Transverse colon (tissue), 4 donors: ENCODE measurements at regions of chr4 and their contacts with region 1.

Region 1: GRCh38 chr4:159910721-159911120 is 807.8 kb downstream of the RAPGEF2 start:
- DNase-seq: no peak
- H3K4me3 ChIP-seq: no peak overlapping the region
- H3K27ac ChIP-seq: no peak overlapping the region
- H3K4me1 ChIP-seq: no peaks in the 10 kb centered on the region
- H3K27me3 ChIP-seq: no peaks in the 10 kb centered on the region
- CTCF ChIP-seq: no peak
- EP300 ChIP-seq: no peak
- POLR2A ChIP-seq: no peak

Region 2: DNA sequence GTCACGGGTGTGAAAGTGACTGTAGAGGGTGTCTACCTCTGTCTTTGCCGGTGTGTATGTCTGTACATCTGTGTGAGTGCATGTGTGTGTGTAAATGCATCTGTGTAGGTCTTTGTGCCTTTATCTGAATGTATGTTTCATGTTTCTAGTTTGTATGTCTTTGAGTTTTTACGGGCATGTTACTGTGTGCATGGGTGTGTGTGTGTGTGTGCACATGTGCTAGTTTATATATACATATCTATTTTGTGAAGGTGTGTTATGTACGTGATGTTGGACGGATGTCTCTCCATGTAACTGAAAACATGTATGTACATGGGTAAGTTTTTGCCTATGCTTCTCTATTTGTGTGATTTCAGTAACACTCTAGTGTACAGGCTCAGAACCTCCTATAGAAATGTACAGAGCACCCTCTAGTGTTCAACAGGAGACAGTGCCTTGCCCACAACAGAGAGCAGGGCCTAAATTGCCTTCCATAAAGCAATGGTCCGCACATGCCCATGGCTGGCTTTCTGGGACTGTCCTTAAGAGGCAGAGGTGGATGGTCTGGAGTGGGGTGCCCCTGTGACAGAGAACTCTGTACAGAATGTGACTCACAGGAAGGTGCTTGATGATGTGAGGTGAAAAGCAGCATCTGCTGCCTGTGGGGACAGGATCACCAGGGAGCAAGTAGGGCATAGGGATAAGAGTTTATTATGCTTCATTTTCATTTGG is 464.3 kb before region 1 on chr4:
- in situ Hi-C with region 1: no loop called
- intact Hi-C with region 1: loop called (anchors 5 kb)
- DNase-seq: peak; percentile 9
- H3K4me3 ChIP-seq: no peak overlapping the region
- H3K27ac ChIP-seq: no peak overlapping the region
- H3K4me1 ChIP-seq: no peaks in the 10 kb centered on the region
- H3K27me3 ChIP-seq: no peaks in the 10 kb centered on the region
- CTCF ChIP-seq: peak; percentile 60 to 82 (median 77)
- EP300 ChIP-seq: no peak
- POLR2A ChIP-seq: no peak